Activated CD4-positive, alpha-beta memory T cell treated with anti-CD3 and anti-CD28 coated beads for 36 hours (primary cell): ENCODE measurements at regions of chr5 and their contacts with region 1.

Region 1: GRCh38 chr5:139968547-139969261 is 74.4 kb downstream of the NRG2 start:
- DNase-seq: peak; percentile 92
- H3K4me3 Mint-ChIP-seq: no peak overlapping the region
- H3K27ac Mint-ChIP-seq: no peak overlapping the region
- H3K4me1 Mint-ChIP-seq: no peaks in the 10 kb centered on the region
- H3K27me3 Mint-ChIP-seq: peaks cover 4% of the 10 kb centered on the region

Region 2: DNA sequence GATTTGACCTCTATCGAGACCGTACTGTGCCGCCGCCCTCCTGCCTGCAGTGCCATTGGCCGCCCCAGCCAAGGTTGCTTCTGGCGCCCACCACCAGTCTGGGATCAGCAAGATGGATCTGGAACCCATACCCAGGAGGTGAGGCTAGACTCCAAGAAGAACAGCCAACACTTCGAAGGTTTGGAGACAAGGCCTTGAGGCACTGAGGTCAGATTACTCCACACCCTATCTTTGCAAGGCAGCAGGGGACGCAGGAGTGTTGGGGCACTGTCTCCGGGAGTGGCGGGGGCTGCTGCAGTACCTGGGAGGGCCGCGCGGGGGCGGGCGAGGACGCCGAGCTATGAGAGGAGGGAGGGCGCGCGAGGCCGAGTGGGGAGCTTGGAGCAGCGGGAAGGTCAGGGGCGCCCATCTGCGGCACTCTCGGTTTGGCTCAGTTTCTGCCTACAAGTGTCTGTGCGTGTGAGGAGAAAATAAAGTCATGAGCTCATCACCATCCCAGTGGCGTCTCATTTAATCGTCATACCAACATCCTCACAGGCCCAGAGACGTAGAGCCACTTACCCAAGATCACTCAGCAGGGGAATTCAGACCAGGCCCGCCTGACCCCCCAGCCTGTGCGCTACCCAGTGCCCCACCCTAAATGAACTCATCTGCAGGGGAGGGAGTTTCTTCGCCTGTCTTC is 193.6 kb before region 1 on chr5:
- CTCF ChIA-PET with region 1: interaction called, 41 read pairs
- POLR2A ChIA-PET with region 1: interaction called, 3 read pairs
- intact Hi-C with region 1: loop called (anchors 1 kb)
- DNase-seq: peak; percentile 88
- H3K4me3 Mint-ChIP-seq: no peak overlapping the region
- H3K27ac Mint-ChIP-seq: no peak overlapping the region
- H3K4me1 Mint-ChIP-seq: peaks cover 9% of the 10 kb centered on the region
- H3K27me3 Mint-ChIP-seq: peaks cover 5% of the 10 kb centered on the region

Region 3: GRCh38 chr5:139863855-139864558 is 104.7 kb before region 1 on chr5:
- CTCF ChIA-PET with region 1: interaction called, 20 read pairs
- POLR2A ChIA-PET with region 1: no interaction called
- intact Hi-C with region 1: no loop called
- DNase-seq: peak; percentile 66
- H3K4me3 Mint-ChIP-seq: no peak overlapping the region
- H3K27ac Mint-ChIP-seq: no peak overlapping the region
- H3K4me1 Mint-ChIP-seq: no peaks in the 10 kb centered on the region
- H3K27me3 Mint-ChIP-seq: no peaks in the 10 kb centered on the region

Region 4: DNA sequence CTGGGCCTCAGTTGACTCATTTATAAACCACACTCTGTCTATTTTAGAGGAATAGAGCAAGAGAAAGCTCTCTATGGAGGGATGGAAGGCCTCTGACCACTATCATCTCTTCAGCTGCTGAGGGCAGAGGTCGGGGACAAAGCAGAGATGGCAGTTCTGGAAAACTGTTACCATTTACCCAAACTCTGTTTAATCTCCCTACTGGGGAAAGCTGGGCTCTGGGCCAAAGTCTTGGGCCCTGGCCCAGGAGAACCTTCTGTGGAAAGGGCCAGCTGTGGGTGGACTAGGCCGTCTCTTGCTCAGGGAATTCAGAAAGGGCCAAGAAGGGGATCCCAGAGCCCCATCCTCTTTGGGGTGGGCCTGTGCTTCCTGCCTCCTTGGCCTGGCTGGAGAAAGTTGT is 73.1 kb before region 1 on chr5:
- CTCF ChIA-PET with region 1: interaction called, 21 read pairs
- POLR2A ChIA-PET with region 1: no interaction called
- intact Hi-C with region 1: no loop called
- DNase-seq: no peak
- H3K4me3 Mint-ChIP-seq: no peak overlapping the region
- H3K27ac Mint-ChIP-seq: no peak overlapping the region
- H3K4me1 Mint-ChIP-seq: no peaks in the 10 kb centered on the region
- H3K27me3 Mint-ChIP-seq: peaks cover 12% of the 10 kb centered on the region

Region 5: GRCh38 chr5:139949710-139950109 is 19.0 kb before region 1 on chr5:
- CTCF ChIA-PET with region 1: interaction called, 42 read pairs
- POLR2A ChIA-PET with region 1: no interaction called
- intact Hi-C with region 1: no loop called
- DNase-seq: no peak
- H3K4me3 Mint-ChIP-seq: no peak overlapping the region
- H3K27ac Mint-ChIP-seq: no peak overlapping the region
- H3K4me1 Mint-ChIP-seq: no peaks in the 10 kb centered on the region
- H3K27me3 Mint-ChIP-seq: peaks cover 31% of the 10 kb centered on the region

Region 6: GRCh38 chr5:140000332-140000731 is 31.6 kb after region 1 on chr5:
- CTCF ChIA-PET with region 1: interaction called, 16 read pairs
- POLR2A ChIA-PET with region 1: no interaction called
- intact Hi-C with region 1: no loop called
- DNase-seq: no peak
- H3K4me3 Mint-ChIP-seq: no peak overlapping the region
- H3K27ac Mint-ChIP-seq: no peak overlapping the region
- H3K4me1 Mint-ChIP-seq: no peaks in the 10 kb centered on the region
- H3K27me3 Mint-ChIP-seq: peaks cover 38% of the 10 kb centered on the region